ENCODE measurements at regions of chr1 and their contacts with region 1.

Region 1: GRCh38 chr1:32013386-32014198 is at the start of gene KHDRBS1:
- DNase-seq: peak; percentile 97
- H3K4me3 ChIP-seq: peak within 1 kb of the TSS; percentile 74 to 96 (median 84)
- H3K27ac ChIP-seq: peak within 1 kb of the TSS; percentile 87
- H3K4me1 ChIP-seq: peaks cover 17% of the 10 kb centered on the region
- H3K27me3 ChIP-seq: no peaks in the 10 kb centered on the region
- CTCF ChIP-seq: no peak
- total RNA-seq, gene KHDRBS1: 39.8 to 109 TPM

Region 2: GRCh38 chr1:31753707-31754349 is 259.8 kb before region 1 on chr1:
- CTCF ChIA-PET with region 1: interaction called, 15 read pairs
- dilution Hi-C with region 1: no loop called
- in situ Hi-C with region 1: no loop called
- intact Hi-C with region 1: no loop called
- DNase-seq: no peak
- H3K4me3 ChIP-seq: no peak overlapping the region
- H3K27ac ChIP-seq: no peak overlapping the region
- H3K4me1 ChIP-seq: peaks cover 30% of the 10 kb centered on the region
- H3K27me3 ChIP-seq: no peaks in the 10 kb centered on the region
- CTCF ChIP-seq: no peak

Region 3: GRCh38 chr1:32122151-32122550 is 108.6 kb after region 1 on chr1:
- CTCF ChIA-PET with region 1: no interaction called
- dilution Hi-C with region 1: no loop called
- in situ Hi-C with region 1: no loop called
- intact Hi-C with region 1: no loop called
- DNase-seq: no peak
- H3K4me3 ChIP-seq: no peak overlapping the region
- H3K27ac ChIP-seq: no peak overlapping the region
- H3K4me1 ChIP-seq: no peaks in the 10 kb centered on the region
- H3K27me3 ChIP-seq: no peaks in the 10 kb centered on the region
- CTCF ChIP-seq: no peak